GM10248 (cell line): ENCODE measurements at regions of chr5 and their contacts with region 1.

Region 1: DNA sequence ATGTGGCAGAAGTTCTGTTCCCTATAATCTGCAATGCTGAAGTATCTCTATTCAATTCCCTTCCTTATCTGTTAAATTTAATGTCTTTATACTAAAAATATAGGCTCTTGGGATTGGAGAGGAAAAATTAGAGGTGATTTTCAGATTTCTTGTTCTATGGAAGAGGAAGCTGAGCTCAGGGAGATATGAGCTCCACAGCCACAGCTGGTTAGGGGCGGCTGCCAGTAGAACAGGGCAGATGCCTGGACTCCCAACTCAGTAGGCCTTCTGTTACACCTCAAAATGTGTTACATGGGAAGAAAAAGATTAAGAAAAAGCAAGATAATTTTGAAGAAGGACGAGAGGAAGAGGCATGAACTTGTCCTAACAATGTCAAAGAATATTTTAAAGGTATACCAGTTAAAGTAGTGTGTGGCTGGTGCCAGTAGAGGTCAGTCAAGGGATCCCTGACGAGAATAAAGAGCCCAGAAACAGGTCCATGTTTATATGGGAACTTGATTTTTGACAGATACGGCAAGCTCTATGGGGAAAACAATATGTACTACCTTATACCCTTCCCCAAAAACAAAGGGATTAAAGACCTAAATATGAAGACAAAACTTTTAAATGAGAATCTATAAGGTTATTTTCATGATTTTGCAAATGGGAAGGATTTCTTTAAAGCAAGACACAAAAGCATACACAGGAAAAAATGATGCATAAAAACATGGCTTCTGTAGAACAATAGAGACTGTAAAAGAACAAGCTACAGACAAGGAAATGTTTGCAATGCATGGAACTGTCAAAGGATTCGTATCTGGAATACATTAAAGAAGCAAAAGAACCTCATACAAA is 28.7 kb downstream of the DNAJC21 start:
- DNase-seq: peak; percentile 54
- CTCF ChIP-seq: peak; percentile 60

Region 2: GRCh38 chr5:34771064-34771463 is 187.0 kb before region 1 on chr5:
- CTCF ChIA-PET with region 1: no interaction called
- POLR2A ChIA-PET with region 1: no interaction called
- DNase-seq: peak; percentile 21
- CTCF ChIP-seq: no peak

Region 3: DNA sequence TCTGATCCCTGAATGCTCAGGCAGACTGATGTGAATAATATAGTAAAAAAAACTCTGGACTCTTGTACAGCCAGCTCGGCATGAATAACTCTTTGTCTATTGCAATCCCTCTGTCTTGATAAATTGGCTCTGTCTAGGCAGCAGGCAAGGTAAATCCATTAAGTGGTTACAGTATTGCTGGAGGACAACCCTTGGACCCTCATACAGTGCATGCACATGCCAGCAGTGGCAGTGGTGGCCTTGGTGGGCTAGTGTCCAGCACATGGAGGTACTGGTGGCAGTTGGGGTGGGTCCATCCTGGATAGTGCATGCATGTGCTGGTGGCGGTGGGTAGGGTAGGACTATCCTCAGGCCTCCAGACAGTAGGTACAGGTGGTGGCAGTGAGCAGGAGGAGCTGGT is 10.2 kb after region 1 on chr5:
- CTCF ChIA-PET with region 1: interaction called, 13 read pairs
- POLR2A ChIA-PET with region 1: no interaction called
- DNase-seq: no peak
- CTCF ChIP-seq: no peak